ENCODE measurements at regions of chr2 and their contacts with region 1.

Region 1: DNA sequence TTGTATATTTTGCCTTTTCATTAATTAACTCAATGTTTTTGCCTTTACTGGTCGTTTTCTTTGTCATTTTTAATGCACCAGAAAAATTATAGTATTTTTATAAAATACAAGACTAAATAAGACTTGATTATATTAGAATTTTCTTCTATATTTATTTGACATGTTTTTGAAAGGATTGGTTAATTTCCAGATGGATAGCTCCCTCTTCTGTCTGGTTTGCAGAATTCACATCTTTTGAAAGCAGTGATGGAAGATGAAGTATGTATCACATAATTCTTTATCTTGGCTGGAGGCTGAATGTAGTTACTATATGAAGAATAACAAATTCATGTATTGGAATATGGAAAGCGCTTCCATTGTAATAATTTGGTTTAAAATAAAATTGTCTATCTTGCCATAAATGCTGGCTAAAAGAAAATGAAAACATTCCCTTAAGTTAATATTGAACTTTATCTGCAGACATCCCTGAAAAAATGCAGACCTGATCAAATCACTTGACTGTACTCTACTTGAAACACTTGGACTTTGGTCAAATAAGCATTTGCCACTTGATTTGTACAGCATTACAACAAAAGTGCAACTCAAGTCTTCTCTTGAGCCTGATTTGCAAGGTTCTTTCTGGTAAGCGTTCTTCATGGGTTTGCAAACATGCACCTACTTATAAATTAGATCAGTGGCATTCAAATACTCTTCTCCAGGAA is 86.3 kb upstream of the EFEMP1 start:
- DNase-seq: no peak
- H3K4me3 ChIP-seq: no peak overlapping the region
- H3K27ac ChIP-seq: no peak overlapping the region
- H3K27me3 ChIP-seq: no peaks in the 10 kb centered on the region
- CTCF ChIP-seq: peak; percentile 71

Region 2: DNA sequence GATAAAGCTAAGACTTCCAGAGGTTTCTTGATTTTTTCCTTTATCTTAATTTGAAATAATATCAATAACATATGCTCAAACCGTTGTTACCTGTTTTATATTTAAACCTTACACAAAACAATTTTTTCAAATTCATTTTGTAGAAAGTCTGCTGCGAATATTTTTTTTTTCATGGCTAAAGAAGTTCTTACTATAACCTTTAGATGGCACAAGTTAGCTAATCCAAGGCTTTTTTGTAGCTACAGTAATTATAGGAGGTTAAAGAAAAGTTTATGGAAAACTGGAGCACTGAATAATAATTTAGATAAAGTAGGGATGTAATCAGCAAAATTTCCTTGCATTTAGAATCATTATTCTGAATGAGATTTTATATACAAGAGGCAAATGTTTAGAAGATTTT is 238.3 kb before region 1 on chr2:
- CTCF ChIA-PET with region 1: interaction called, 38 read pairs
- POLR2A ChIA-PET with region 1: no interaction called
- DNase-seq: no peak
- H3K4me3 ChIP-seq: no peak overlapping the region
- H3K27ac ChIP-seq: no peak overlapping the region
- H3K27me3 ChIP-seq: no peaks in the 10 kb centered on the region
- CTCF ChIP-seq: peak; percentile 77

Measured in AG04450 (cell line).